ENCODE measurements at regions of chr12 and their contacts with region 1.

Region 1: DNA sequence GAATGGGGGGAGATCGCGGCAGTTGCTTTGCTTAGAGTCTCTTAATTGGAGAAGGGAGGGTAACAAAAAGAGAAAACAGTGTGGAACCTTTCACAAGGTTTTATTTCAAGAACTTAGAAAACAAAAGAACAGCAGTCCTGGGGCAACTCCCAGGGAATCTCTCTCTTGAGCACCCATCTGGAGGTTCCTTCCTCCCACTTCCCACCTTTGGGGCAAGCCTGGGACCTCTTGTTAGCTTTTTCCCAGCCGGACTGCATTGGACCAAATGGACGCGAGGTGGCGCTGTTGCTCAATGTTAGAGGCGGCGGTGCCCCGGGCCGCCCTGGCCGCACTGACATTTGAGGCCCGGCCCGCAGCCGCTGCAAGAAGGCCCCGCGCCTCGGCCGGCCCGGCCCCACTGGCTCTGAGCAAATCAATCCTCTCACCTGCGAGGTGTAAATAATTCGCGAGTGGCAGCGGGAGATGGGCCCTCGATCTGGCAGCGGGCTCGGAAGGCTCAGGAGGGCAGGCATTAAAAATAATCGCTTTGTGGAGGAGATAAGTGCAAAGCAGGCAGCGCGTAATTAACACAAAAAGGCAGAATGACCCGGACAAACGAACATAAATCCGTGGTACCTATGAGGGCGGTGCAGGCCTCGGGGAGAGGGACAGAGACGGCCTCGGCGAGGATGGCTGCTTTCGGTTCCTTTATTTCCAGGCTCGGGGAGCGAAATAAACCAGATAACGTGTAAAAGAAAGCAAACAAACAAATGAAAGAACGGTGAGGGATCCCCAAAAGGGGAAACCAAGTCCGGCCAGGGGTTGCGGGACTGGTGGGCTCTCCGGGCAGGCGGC is 2.7 kb upstream of the HOXC8 start:
- DNase-seq: peak; percentile 77 to 91
- H3K4me3 ChIP-seq: peak overlapping the region; percentile 35 to 71 (median 57)
- H3K27ac ChIP-seq: peak overlapping the region; percentile 48 to 81
- H3K4me1 ChIP-seq: peaks cover 0 to 7% of the 10 kb centered on the region in 2 donors
- H3K27me3 ChIP-seq: peaks cover 0 to 3% of the 10 kb centered on the region in 2 donors
- CTCF ChIP-seq: peak; percentile 90 to 98 (median 97)
- POLR2A ChIP-seq: no peak

Region 2: GRCh38 chr12:52249051-52249461 is 1757.0 kb before region 1 on chr12:
- intact Hi-C with region 1: no loop called
- DNase-seq: peak; percentile 92 to 94
- H3K4me3 ChIP-seq: no peak overlapping the region
- H3K27ac ChIP-seq: peak overlapping the region; percentile 97 to 98
- H3K4me1 ChIP-seq: peaks cover 8 to 45% of the 10 kb centered on the region in 2 donors
- H3K27me3 ChIP-seq: no peaks in the 10 kb centered on the region
- CTCF ChIP-seq: no peak
- POLR2A ChIP-seq: no peak

Region 3: GRCh38 chr12:53928054-53928835 is 77.8 kb before region 1 on chr12:
- intact Hi-C with region 1: no loop called
- DNase-seq: no peak
- H3K4me3 ChIP-seq: no peak overlapping the region
- H3K27ac ChIP-seq: no peak overlapping the region
- H3K4me1 ChIP-seq: no peaks in the 10 kb centered on the region
- H3K27me3 ChIP-seq: peaks cover 0 to 87% of the 10 kb centered on the region in 2 donors
- CTCF ChIP-seq: no peak
- POLR2A ChIP-seq: no peak

Region 4: GRCh38 chr12:53974084-53975063 is 31.7 kb before region 1 on chr12 and contains the start of gene HOTAIR:
- intact Hi-C with region 1: no loop called
- DNase-seq: no peak
- H3K4me3 ChIP-seq: peak within 1 kb of the TSS; percentile 42 to 65 (median 46)
- H3K27ac ChIP-seq: peak within 1 kb of the TSS in 1 of 2 donors; percentile 25
- H3K4me1 ChIP-seq: peaks cover 0 to 8% of the 10 kb centered on the region in 2 donors
- H3K27me3 ChIP-seq: peaks cover 11 to 97% of the 10 kb centered on the region in 2 donors
- CTCF ChIP-seq: no peak
- POLR2A ChIP-seq: no peak
- total RNA-seq, gene HOTAIR: 0.73 to 1.3 TPM in 2 of 3 donors, not detected in the other

Region 5: GRCh38 chr12:54207484-54208294 is 201.6 kb after region 1 on chr12:
- intact Hi-C with region 1: loop called (anchors 10 kb)
- DNase-seq: peak; percentile 60 to 78
- H3K4me3 ChIP-seq: no peak overlapping the region
- H3K27ac ChIP-seq: no peak overlapping the region
- H3K4me1 ChIP-seq: no peaks in the 10 kb centered on the region
- H3K27me3 ChIP-seq: no peaks in the 10 kb centered on the region
- CTCF ChIP-seq: peak; percentile 91 to 94 (median 94)
- POLR2A ChIP-seq: no peak

Region 6: GRCh38 chr12:54549774-54550451 is 543.8 kb after region 1 on chr12:
- intact Hi-C with region 1: no loop called
- DNase-seq: no peak
- H3K4me3 ChIP-seq: peak overlapping the region; percentile 38 to 70 (median 53)
- H3K27ac ChIP-seq: no peak overlapping the region
- H3K4me1 ChIP-seq: no peaks in the 10 kb centered on the region
- H3K27me3 ChIP-seq: peaks cover 0 to 3% of the 10 kb centered on the region in 2 donors
- CTCF ChIP-seq: no peak
- POLR2A ChIP-seq: no peak

Region 7: GRCh38 chr12:55966408-55967281 is 1960.6 kb after region 1 on chr12 and contains the start of gene CDK2:
- intact Hi-C with region 1: loop called (anchors 10 kb)
- DNase-seq: peak; percentile 96 to 97
- H3K4me3 ChIP-seq: peak within 1 kb of the TSS; percentile 66 to 94 (median 87)
- H3K27ac ChIP-seq: peak within 1 kb of the TSS; percentile 95
- H3K4me1 ChIP-seq: peaks cover 0 to 12% of the 10 kb centered on the region in 2 donors
- H3K27me3 ChIP-seq: no peaks in the 10 kb centered on the region
- CTCF ChIP-seq: no peak
- POLR2A ChIP-seq: peak; percentile 78
- total RNA-seq, gene CDK2: 8.2 to 27.2 (median 27.1) TPM

Measured in breast epithelium (tissue), 4 donors.